ENCODE measurements at regions of chr4 and their contacts with region 1.

Region 1: DNA sequence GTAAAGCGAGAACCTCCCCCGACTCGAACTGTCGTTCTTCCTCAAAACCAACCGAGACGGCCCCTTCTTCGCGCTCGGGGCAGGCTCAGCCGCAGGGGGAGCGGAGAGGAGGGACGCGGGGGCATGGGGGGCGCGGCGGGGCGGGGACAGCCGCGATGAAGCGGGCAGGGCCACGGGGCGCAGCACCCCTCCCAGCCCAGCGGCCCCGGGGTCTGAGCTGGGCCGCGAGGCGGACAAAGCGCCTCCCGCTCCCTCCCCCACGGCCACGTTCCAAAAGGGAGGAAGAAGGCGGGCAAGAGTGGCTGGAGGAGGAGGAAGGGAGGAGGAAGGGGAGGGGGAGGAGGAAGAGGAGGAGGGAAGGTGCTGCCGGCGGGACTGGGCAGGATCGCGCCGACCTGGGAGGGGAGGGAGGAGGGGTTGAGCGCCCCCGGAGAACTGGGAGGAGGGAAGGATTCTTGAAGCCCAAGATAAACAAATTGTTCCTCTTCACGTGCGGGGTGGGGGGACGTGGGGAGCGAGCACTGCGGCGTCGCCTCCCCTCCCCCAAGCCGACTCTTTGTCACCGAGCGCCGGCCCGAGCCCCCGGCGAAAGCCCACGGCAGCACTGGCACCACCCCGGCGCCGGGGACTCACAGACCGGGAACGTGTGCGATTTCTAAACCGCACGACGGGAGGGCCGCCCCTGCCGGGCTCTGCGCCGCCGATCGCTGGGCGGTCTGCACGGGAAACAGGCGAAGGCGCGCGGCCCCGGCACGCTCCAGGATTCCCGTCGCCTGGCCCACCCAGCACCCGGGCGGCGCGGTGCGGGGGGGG is 2.9 kb downstream of the MAML3 start:
- DNase-seq: peak; percentile 92
- ATAC-seq: peak; percentile 81

Region 2: DNA sequence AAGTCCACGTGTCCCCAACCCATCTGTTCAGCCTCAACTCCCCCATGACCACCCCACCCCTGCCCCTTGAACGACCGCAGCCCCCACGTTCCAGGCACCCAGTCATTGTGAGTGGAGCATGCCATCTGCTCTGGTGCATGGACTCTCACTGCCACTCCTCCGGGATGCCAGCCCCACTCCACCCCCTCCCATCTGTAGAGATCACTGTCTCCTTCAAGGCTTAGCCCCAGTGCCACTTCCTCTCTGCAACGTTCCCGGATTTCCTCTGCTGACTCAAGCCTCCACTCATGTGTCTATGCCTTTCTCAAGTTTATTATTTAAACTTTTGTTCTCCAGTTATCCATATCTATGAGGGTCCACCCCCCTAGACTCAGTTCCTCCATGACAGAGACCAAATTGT is 51.1 kb before region 1 on chr4:
- intact Hi-C with region 1: loop called (anchors 2 kb)
- DNase-seq: peak; percentile 41
- ATAC-seq: peak; percentile 45